BJ (cell line): ENCODE measurements at regions of chr11 and their contacts with region 1.

Region 1: DNA sequence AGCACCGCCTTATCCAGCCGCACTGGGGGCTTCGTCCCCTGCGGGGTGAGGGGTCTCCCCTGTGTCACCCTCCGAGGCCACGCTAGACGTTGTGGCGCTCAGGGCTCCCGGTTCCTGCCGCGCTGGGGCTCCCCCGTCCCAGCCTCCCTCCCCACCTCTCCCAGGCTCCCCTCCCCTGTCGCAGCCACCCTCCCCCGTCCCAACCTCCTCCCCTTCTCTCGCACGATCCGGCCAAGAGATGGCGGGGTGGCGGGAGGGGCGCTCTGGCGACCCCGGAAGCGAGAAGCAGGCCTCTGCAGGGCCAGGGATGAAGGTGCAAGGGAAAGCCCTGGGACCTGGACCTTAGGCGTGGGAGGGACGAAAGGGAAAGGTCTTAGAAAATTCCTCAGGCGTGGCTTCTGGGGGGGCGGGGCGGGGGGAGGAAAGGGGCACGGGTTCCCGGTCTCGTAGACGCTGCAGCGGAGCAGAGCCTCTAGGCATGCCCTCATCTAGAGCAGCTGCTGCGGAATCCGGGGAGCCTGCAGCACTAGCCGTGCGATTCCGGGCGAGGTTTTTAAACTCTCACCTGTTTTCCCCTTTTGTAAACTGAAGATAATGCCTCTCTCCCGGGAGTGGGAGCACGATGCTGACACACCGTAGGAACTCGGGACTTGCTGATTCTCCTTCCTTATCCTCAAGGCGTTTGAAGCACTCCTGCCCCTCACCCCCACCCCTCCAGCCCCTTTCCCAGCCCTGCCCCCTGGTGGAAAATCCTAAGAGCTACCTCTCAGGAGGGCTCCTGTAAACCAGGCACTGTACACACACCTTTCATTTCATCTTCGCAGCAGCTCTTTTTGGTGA is 14.4 kb downstream of the KCNJ5 start:
- DNase-seq: no peak
- H3K4me3 ChIP-seq: peak overlapping the region; percentile 51
- H3K27me3 ChIP-seq: 0 out of 2 replicates have a peak, but pooled peaks cover 2% of the 10 kb centered on the region
- CTCF ChIP-seq: peak; percentile 66

Region 2: GRCh38 chr11:128890543-128891368 is 14.8 kb before region 1 on chr11 and contains the start of gene KCNJ5:
- CTCF ChIA-PET with region 1: interaction called, 48 read pairs
- POLR2A ChIA-PET with region 1: interaction called, 4 read pairs
- DNase-seq: no peak
- H3K4me3 ChIP-seq: peak within 1 kb of the TSS; percentile 39
- H3K27me3 ChIP-seq: peaks cover 32% of the 10 kb centered on the region
- CTCF ChIP-seq: no peak
- polyA plus RNA-seq, gene KCNJ5: not detected in 2 replicates

Region 3: DNA sequence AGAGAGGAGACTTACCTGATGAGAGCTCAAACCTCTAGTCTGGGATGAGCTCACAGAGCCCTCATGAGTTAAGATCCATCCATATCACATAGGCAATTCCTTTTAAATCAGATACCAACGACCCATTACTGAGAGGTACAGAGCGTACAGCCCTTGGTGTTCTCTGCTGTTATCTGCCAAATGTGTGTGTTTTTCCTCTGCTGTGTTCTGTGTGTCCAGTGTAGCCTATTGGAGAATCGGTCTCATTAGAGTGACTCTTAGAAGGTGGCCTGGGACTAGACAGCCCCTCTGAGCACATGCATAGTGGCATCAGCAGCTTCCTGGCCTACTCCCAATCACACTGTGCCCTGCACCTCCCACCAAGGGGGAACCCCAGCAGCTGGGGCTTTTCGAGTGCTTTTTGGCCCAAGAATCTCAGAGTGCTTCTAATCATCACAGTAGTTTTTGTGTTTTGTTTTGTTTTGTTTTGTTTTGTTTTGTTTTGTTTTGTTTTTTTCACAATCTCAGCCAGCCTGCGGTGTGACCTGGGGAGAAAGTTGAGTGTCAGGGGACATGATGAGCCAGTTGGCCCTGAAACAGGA is 11.7 kb after region 1 on chr11:
- CTCF ChIA-PET with region 1: interaction called, 14 read pairs
- POLR2A ChIA-PET with region 1: no interaction called
- DNase-seq: no peak
- H3K4me3 ChIP-seq: no peak overlapping the region
- H3K27me3 ChIP-seq: peaks cover 4% of the 10 kb centered on the region
- CTCF ChIP-seq: no peak

Region 4: GRCh38 chr11:128939591-128939990 is 34.0 kb after region 1 on chr11:
- CTCF ChIA-PET with region 1: interaction called, 9 read pairs
- POLR2A ChIA-PET with region 1: interaction called, 10 read pairs
- DNase-seq: no peak
- H3K4me3 ChIP-seq: no peak overlapping the region
- H3K27me3 ChIP-seq: peaks cover 19% of the 10 kb centered on the region
- CTCF ChIP-seq: no peak

Region 5: GRCh38 chr11:128956401-128957201 is 51.0 kb after region 1 on chr11:
- CTCF ChIA-PET with region 1: interaction called, 16 read pairs
- POLR2A ChIA-PET with region 1: no interaction called
- DNase-seq: peak; percentile 26
- H3K4me3 ChIP-seq: no peak overlapping the region
- H3K27me3 ChIP-seq: peaks cover 1% of the 10 kb centered on the region
- CTCF ChIP-seq: peak; percentile 65